Ovary (tissue), 10 donors: ENCODE measurements at regions of chr17 and their contacts with region 1.

Region 1: GRCh38 chr17:39036014-39036413 is 68.8 kb upstream of the FBXO47 start:
- DNase-seq: no peak
- H3K4me3 ChIP-seq: no peak overlapping the region
- H3K27ac ChIP-seq: no peak overlapping the region
- H3K4me1 ChIP-seq: no peaks in the 10 kb centered on the region
- H3K27me3 ChIP-seq: no peaks in the 10 kb centered on the region
- CTCF ChIP-seq: no peak
- EP300 ChIP-seq: no peak
- POLR2A ChIP-seq: no peak

Region 2: GRCh38 chr17:41008805-41009204 is 1972.8 kb after region 1 on chr17 and contains the start of gene KRTAP3-1:
- intact Hi-C with region 1: loop called in 1 of 4 experiments (anchors 10 kb)
- DNase-seq: no peak
- H3K4me3 ChIP-seq: no peak within 1 kb of the TSS
- H3K27ac ChIP-seq: no peak within 1 kb of the TSS
- H3K4me1 ChIP-seq: no peaks in the 10 kb centered on the region
- H3K27me3 ChIP-seq: no peaks in the 10 kb centered on the region
- CTCF ChIP-seq: no peak
- EP300 ChIP-seq: no peak
- POLR2A ChIP-seq: no peak
- total RNA-seq, gene KRTAP3-1: not detected